ENCODE measurements at regions of chr1 and their contacts with region 1.

Region 1: DNA sequence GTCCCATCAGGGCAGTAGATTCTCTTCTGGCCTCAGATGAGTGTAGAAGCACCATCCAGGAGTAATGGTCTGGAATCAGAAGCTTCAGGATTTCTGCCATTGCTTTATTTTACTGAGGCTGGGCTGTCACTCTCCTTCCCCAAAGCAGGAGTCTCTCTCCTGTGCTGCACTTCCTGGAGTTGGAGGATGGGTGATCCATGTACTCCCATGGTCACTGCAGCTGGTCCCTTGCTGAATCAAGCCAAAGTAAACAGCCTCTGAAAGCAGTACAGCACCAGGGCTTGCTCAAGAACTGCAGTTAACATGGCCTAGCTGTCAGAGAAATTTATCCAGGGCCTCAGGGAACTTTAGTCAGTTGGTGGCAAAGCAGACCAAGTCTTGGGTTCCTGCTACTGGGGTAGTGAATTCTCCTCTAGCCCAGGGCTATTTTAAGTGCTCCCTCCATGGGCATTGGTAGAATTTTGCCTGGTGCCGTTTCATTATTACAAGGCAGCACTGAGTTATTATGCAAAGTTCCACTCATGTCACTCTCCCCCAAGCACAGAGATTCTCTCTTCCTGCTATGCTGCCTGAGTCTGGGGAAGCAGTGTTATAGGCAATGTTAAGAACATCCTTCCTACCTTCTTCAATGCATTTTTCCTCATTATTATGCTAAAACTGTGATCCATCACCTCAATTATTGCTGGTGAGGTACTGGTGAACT is 29.5 kb downstream of the DRAM2 start:
- DNase-seq: no peak
- ATAC-seq: no peak
- H3K4me3 Mint-ChIP-seq: no peak overlapping the region
- H3K27ac Mint-ChIP-seq: no peak overlapping the region
- H3K4me1 Mint-ChIP-seq: no peaks in the 10 kb centered on the region
- H3K27me3 Mint-ChIP-seq: no peaks in the 10 kb centered on the region

Region 2: GRCh38 chr1:111236815-111237214 is 126.5 kb after region 1 on chr1:
- CTCF ChIA-PET with region 1: no interaction called
- POLR2A ChIA-PET with region 1: interaction called, 13 read pairs
- intact Hi-C with region 1: no loop called
- DNase-seq: no peak
- ATAC-seq: no peak
- H3K4me3 Mint-ChIP-seq: no peak overlapping the region
- H3K27ac Mint-ChIP-seq: no peak overlapping the region
- H3K4me1 Mint-ChIP-seq: peaks cover 22% of the 10 kb centered on the region
- H3K27me3 Mint-ChIP-seq: no peaks in the 10 kb centered on the region

Region 3: GRCh38 chr1:111733183-111733991 is 623.0 kb after region 1 on chr1:
- CTCF ChIA-PET with region 1: no interaction called
- POLR2A ChIA-PET with region 1: no interaction called
- intact Hi-C with region 1: no loop called
- DNase-seq: no peak
- ATAC-seq: peak; percentile 39
- H3K4me3 Mint-ChIP-seq: no peak overlapping the region
- H3K27ac Mint-ChIP-seq: no peak overlapping the region
- H3K4me1 Mint-ChIP-seq: peaks cover 7% of the 10 kb centered on the region
- H3K27me3 Mint-ChIP-seq: peaks cover 12% of the 10 kb centered on the region

Measured in activated CD4-positive, alpha-beta T cell treated with anti-CD3 and anti-CD28 coated beads for 36 hours (primary cell).